BJ (cell line): ENCODE measurements at regions of chr6 and their contacts with region 1.

Region 1: GRCh38 chr6:37819177-37819823 is at the start of gene ZFAND3:
- DNase-seq: peak; percentile 49
- H3K4me3 ChIP-seq: peak within 1 kb of the TSS; percentile 88
- H3K27me3 ChIP-seq: 0 out of 2 replicates have a peak, but pooled peaks cover 2% of the 10 kb centered on the region
- CTCF ChIP-seq: no peak
- polyA plus RNA-seq, gene ZFAND3: 15.5 and 21.8 TPM in 2 replicates

Region 2: DNA sequence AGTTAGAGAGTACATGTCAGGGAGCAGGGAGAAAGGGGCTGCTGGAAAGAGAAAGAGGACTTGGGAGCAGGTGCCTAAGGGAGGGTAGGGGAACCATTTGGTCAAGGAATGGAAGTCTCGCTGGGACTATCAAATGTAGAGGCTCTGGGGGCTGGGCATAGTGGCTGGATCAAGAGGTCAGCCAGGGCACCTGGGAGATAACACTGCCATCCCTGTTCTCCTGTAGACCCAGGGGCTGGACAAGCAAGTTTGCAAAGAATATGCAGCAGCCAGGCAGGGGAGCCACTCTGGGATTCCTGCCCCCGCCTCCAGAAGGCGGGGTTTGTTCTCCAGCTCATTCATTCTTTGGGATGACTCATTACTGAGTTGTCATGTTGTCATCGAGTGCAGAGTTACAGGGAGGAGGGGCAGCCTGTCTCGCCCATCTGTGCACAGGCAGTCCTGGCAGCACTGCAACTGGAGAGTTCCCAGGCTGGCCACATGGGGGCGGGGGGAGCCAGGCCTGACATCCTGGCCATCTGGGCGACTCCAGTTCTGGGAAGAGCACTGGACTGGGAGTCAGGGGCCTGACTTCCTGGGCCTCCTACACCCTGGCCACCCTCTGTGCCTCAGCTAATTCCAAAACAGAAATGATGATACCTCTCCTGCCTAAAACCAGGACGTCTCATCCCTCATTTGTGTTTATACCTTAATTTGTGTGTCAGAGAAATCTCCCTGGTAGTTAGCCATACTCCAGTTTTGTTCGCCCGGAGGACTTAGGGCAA is 28.0 kb before region 1 on chr6:
- CTCF ChIA-PET with region 1: no interaction called
- POLR2A ChIA-PET with region 1: interaction called, 15 read pairs
- DNase-seq: peak; percentile 83
- H3K4me3 ChIP-seq: no peak overlapping the region
- H3K27me3 ChIP-seq: no peaks in the 10 kb centered on the region
- CTCF ChIP-seq: peak; percentile 98

Region 3: GRCh38 chr6:37807656-37808055 is 11.6 kb before region 1 on chr6:
- CTCF ChIA-PET with region 1: no interaction called
- POLR2A ChIA-PET with region 1: no interaction called
- DNase-seq: no peak
- H3K4me3 ChIP-seq: no peak overlapping the region
- H3K27me3 ChIP-seq: no peaks in the 10 kb centered on the region; the same call in 1 of the 2 replicates
- CTCF ChIP-seq: peak; percentile 22; the same call in 1 of the 2 replicates